Mucosa of descending colon (tissue), 3 donors: ENCODE measurements at regions of chr2 and their contacts with region 1.

Region 1: DNA sequence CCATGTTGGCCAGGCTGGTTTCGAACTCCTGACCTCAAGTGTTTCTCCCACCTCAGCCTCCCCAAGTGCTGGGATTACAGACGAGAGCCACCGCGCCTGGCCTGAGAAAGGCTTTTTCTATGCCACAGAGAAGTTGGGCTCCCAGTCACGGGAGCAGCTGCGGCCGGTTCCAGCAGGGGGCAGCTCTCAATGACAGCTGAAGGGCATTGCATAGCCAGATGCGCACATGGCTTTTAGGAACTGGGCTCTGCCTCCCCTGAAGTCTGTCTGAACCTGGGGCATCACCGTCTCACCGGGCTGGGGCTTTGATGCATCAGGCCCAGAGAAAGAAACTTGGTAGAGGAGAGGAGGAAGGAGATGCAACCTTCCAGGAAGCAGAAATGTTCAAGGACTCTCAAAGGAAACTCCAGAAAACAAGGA is 84.2 kb upstream of the LAPTM4A start:
- DNase-seq: peak in 2 of 3 donors; percentile 82 to 84
- ATAC-seq: peak; percentile 65
- H3K4me3 ChIP-seq: no peak overlapping the region
- H3K4me1 ChIP-seq: peaks cover 3% of the 10 kb centered on the region
- CTCF ChIP-seq: peak; percentile 54

Region 2: GRCh38 chr2:20225294-20226151 is 89.9 kb after region 1 on chr2:
- intact Hi-C with region 1: loop called in 1 of 2 experiments (anchors 10 kb)
- DNase-seq: peak; percentile 89 to 92 (median 91)
- ATAC-seq: peak; percentile 85
- H3K4me3 ChIP-seq: no peak overlapping the region
- H3K4me1 ChIP-seq: peaks cover 33% of the 10 kb centered on the region
- CTCF ChIP-seq: peak; percentile 31

Region 3: DNA sequence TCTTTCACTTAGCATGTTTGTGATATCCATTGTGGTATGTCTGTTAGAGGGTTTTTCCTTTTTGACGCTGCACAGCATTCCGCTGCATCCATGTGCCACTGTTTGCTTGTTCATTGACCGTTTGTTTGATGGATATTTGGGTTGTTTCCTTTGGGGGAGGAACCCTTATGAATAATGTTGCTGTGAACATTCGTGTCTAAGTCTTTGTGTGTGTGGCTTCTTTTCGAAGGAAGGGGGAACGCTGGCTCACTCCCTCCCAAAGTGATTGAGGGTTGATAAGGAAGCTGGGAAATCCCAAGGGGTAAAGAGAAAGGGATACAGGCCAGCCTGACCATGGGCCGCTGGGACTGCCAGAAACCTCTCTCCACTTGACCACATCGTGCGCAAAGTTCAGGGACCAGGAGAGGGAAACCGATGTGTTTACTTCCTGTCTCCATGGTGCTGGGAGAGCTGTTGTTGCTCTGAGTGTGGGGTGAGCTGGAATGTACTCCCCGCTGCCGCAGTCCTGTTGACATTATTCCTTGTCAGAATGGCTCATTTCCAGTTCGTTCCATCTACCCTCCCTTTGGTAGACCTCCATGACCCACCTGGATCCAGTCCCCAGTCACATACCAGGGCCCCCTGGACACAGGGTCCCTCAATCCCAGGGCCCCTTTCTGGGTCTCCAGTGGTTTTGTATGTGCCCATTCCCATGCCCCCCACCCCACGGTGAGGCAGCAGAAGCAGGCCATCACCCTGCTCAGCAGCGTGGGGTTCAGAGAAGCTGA is 475.6 kb after region 1 on chr2:
- intact Hi-C with region 1: no loop called
- DNase-seq: peak; percentile 45 to 62 (median 53)
- ATAC-seq: peak; percentile 46
- H3K4me3 ChIP-seq: no peak overlapping the region
- H3K4me1 ChIP-seq: peaks cover 3% of the 10 kb centered on the region
- CTCF ChIP-seq: no peak